ENCODE measurements at regions of chr1 and their contacts with region 1.

Region 1: DNA sequence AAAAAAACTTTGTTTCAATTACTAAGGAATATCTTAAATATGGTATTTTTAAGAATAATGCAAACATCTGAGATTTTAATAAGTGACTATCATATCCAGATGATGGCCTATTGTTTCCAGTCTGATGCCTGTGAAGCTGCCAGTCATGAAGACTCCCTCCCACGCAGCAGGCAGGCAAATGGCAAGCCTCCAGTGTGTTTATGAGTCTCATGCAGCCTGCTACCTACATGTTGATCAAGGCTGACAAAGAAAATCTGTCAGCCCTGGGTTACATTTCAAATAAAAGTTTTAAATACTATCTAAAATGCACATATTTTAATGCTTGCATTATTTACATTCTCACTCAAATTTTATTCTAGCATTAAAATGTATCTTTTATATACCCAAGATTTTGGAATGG is 137.6 kb upstream of the RNPC3 start:
- DNase-seq: no peak
- H3K4me3 ChIP-seq: no peak overlapping the region
- H3K27ac ChIP-seq: no peak overlapping the region
- H3K4me1 ChIP-seq: no peaks in the 10 kb centered on the region
- H3K27me3 ChIP-seq: no peaks in the 10 kb centered on the region
- CTCF ChIP-seq: no peak
- POLR2A ChIP-seq: no peak

Region 2: GRCh38 chr1:103333181-103333580 is 54.7 kb before region 1 on chr1:
- intact Hi-C with region 1: no loop called
- DNase-seq: no peak
- H3K4me3 ChIP-seq: no peak overlapping the region
- H3K27ac ChIP-seq: no peak overlapping the region
- H3K4me1 ChIP-seq: no peaks in the 10 kb centered on the region
- H3K27me3 ChIP-seq: no peaks in the 10 kb centered on the region
- CTCF ChIP-seq: no peak
- POLR2A ChIP-seq: no peak

Region 3: DNA sequence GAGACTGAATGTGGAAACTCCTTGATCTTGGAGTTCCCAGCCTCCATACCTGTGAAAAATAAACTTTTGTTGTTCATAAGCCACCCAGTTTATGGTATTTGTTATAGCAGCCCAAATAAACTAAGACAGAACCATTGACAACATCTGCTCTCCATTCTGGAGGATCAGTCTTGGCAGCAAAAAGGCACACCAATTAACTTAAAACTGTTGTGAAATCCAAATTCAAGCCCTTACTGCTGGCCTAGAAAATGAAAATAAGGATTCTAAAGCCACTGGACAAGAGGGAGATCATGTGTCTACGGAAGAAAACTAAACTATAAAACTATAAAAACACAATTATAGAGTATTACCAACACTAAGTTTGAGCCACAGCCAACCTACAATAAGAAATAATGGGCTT is 34.5 kb before region 1 on chr1:
- intact Hi-C with region 1: loop called (anchors 5 kb)
- DNase-seq: no peak
- H3K4me3 ChIP-seq: no peak overlapping the region
- H3K27ac ChIP-seq: no peak overlapping the region
- H3K4me1 ChIP-seq: no peaks in the 10 kb centered on the region
- H3K27me3 ChIP-seq: no peaks in the 10 kb centered on the region
- CTCF ChIP-seq: no peak
- POLR2A ChIP-seq: no peak